ENCODE measurements at regions of chr10 and their contacts with region 1.

Region 1: GRCh38 chr10:68988530-68989316 is at the start of gene KIFBP:
- H3K4me3 Mint-ChIP-seq: peak within 1 kb of the TSS; percentile 99
- H3K27ac Mint-ChIP-seq: peak within 1 kb of the TSS; percentile 96
- H3K4me1 Mint-ChIP-seq: peaks cover 40% of the 10 kb centered on the region
- H3K27me3 Mint-ChIP-seq: no peaks in the 10 kb centered on the region

Region 2: DNA sequence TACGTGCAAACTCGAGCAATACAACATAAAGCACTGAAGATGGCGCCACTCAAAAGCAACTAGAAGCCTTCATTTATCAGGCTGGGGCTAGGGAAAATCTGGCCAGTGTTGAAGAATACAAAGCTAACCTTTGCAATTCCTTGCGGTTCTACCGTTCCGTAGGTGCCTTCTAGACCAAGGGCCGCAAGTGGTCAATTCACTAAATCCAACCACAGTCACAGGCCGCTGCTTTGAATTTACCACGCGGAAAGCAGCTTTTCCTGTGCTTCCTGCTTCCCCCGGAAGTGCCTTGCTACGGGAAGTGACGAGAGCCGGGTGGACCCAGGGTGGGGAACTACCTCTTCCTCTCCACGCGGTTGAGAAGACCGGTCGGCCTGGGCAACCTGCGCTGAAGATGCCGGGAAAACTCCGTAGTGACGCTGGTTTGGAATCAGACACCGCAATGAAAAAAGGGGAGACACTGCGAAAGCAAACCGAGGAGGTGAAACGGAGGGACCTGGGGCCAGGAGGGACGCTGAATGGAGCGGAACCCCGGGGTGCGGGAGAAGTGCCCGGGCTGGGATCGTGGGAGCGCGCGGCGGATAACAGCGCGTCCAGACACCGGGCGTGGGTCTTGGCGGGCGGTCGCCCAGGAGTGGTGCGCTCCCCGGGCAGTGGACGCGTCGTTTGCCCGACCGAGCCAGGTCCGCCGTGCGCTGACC is 32.7 kb before region 1 on chr10 and contains the start of gene DDX21:
- intact Hi-C with region 1: loop called (anchors 2 kb)
- H3K4me3 Mint-ChIP-seq: peak within 1 kb of the TSS; percentile 90
- H3K27ac Mint-ChIP-seq: peak within 1 kb of the TSS; percentile 93
- H3K4me1 Mint-ChIP-seq: peaks cover 23% of the 10 kb centered on the region
- H3K27me3 Mint-ChIP-seq: no peaks in the 10 kb centered on the region

Region 3: DNA sequence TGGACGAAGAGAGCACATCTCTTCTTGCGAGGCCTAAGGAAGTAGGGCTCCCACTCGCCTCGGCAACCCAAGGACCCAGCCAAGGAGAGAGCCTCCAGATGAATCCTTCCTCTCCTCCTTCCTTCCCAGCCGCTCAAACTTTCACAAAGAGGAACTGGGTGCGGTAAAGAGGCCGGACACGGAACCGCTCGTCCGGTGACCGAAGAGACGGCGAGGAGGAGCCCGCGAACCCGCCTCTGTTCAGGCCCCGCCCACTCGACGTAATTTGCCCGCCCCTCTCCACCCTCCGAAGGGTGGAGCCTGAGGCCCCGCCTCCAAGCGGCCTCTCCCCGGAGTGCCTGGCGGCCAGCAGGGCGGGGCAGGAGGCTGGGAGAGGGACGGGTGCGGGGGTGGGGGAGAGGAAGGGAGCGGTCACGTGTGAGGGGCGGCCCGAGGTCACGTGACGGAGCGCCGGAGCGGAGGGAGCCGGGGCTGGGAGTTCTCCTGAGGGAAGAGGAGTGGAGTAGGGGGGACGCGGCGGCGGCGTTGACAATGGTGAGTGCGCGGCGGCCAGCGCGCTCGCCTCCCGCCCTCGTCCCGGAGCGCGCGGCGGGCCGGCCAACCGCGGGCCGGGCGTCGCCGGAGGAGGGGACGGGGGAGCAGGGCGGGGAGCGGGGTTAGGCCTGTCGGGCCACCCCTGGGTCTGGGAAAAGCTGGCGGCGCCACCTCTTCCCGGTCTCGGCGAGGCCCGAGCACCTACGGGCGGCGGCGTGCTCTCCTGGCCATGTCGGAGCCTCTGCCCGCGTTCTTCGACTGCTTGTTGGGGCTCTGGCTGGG is 135.2 kb after region 1 on chr10 and contains the start of gene VPS26A:
- intact Hi-C with region 1: loop called (anchors 5 kb)
- H3K4me3 Mint-ChIP-seq: peak within 1 kb of the TSS; percentile 93
- H3K27ac Mint-ChIP-seq: peak within 1 kb of the TSS; percentile 99
- H3K4me1 Mint-ChIP-seq: peaks cover 15% of the 10 kb centered on the region
- H3K27me3 Mint-ChIP-seq: no peaks in the 10 kb centered on the region

Region 4: DNA sequence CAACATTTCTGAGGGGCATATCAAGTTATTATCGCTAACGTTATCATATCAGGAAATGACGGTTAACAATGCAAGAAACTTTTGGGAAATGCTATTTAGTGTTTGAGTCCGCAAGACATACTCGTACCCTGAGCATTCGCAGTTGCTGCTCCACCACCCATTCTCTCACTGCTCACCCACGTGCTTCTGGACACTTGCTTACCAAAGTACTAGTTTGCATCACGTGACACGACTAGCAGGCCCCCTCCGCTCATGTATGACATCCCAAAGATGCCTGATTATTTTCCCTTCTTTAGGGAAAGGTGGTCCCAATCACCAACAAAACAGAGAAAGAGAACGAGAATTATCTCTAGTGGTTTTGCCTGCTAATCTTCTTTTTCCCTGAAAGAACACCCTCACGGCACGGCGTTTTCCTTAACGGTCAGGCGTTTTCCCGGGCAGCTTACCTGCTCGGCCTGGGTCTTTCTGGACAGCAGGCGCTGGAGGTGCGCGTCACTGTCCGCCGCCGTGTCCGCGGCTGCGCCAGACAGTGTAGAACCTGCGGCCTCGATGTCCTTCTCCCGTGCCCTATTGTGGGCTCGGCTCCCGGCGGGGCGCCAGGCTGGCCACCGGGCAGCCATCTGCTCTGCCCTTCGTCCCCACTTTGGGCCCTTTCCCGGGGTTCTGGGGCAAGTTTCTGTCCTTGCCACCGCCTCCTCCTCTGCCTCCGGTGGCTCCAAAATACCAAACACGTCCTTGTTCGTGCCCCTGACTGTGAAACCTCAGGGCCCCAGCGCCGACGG is 191.2 kb after region 1 on chr10 and contains the start of gene SUPV3L1:
- intact Hi-C with region 1: loop called (anchors 5 kb)
- H3K4me3 Mint-ChIP-seq: peak within 1 kb of the TSS; percentile 95
- H3K27ac Mint-ChIP-seq: peak within 1 kb of the TSS; percentile 99
- H3K4me1 Mint-ChIP-seq: peaks cover 25% of the 10 kb centered on the region
- H3K27me3 Mint-ChIP-seq: no peaks in the 10 kb centered on the region